ENCODE measurements at regions of chr12 and their contacts with region 1.

Region 1: DNA sequence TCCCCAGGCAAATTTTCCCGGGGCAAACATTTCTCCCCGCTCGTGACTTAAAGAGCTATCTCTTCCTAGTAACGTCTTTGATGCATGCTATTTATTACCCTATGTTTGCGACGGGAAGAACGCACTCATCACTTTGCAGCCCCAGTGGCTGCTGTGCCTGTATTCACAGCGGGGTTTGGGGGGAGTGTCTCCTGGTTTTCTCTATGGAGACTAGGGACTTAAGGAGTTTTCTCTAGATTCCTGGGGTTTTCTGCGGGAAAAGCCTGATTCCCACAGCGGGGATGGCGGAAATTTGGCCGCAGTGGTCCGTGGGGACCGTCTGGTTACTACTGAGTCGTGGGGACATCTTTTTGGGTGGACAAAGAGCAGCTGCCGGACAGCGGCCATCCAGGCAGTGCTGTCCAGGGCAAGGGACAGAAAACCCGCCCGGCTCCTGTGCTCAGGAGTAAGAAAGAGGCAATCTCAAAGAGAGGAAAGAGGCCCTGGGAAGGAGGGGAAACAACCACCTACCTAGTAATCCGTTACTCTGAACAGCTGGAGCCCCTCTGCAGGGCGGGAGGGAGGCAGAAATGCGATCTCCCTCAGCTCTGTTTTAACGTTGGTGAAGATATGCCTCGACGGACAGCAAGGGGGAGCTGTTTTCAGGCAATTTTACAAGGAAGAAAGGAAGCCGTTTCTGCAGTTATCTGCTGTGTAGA is 771 bp upstream of the AVPR1A start:
- DNase-seq: peak; percentile 15 to 21
- ATAC-seq: peak; percentile 67 to 78 (median 72)
- H3K4me3 ChIP-seq: peak overlapping the region; percentile 22 to 60 (median 52)
- H3K27ac ChIP-seq: peak overlapping the region in 7 of 10 donors; percentile 1 to 58 (median 51)
- H3K4me1 ChIP-seq: peaks cover 0 to 31% (median 23%) of the 10 kb centered on the region in 9 donors
- H3K27me3 ChIP-seq: peaks cover 8 to 80% (median 55%) of the 10 kb centered on the region in 7 donors
- CTCF ChIP-seq: peak; percentile 53 to 83 (median 71)

Region 2: DNA sequence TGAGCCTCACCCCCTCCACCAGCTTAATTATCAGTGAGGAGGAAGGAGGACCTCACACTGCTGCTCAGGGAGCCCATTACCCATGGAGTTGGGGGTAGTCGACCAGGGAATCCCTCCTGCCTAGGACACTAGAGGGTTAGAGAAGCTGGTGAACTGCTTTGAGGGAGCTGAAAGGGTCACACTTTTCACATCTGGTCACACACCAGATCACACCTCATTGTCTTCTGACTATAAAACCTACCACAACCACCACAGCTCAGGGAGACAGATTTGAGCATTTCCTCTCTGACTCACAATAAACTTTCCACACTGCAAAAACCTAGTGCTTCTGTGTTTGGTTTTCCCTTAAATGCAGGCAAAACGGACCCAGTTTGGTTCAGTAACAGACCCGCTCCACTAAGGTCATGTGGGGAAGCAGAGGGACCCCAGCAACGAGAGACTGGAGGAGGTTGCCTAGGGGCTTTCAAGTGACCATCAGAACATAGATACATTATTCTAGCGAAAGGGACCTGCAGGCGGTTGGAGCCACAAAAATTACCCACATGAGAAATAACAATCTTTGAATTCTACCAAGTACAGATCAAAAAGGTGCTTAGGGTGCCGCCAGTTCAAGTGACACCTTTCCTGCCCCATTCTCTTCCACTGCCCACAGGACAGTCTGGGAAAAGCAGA is 150.6 kb after region 1 on chr12:
- intact Hi-C with region 1: loop called in 1 of 10 experiments (anchors 5 kb)
- DNase-seq: no peak
- ATAC-seq: no peak
- H3K4me3 ChIP-seq: no peak overlapping the region
- H3K27ac ChIP-seq: peak overlapping the region in 4 of 10 donors; percentile 2 to 61 (median 30)
- H3K4me1 ChIP-seq: peaks cover 0 to 22% (median 0%) of the 10 kb centered on the region in 9 donors
- H3K27me3 ChIP-seq: no peaks in the 10 kb centered on the region
- CTCF ChIP-seq: no peak

Measured in heart right ventricle (tissue), 16 donors.